WTC11 (cell line): ENCODE measurements at regions of chr2 and their contacts with region 1.

Region 1: DNA sequence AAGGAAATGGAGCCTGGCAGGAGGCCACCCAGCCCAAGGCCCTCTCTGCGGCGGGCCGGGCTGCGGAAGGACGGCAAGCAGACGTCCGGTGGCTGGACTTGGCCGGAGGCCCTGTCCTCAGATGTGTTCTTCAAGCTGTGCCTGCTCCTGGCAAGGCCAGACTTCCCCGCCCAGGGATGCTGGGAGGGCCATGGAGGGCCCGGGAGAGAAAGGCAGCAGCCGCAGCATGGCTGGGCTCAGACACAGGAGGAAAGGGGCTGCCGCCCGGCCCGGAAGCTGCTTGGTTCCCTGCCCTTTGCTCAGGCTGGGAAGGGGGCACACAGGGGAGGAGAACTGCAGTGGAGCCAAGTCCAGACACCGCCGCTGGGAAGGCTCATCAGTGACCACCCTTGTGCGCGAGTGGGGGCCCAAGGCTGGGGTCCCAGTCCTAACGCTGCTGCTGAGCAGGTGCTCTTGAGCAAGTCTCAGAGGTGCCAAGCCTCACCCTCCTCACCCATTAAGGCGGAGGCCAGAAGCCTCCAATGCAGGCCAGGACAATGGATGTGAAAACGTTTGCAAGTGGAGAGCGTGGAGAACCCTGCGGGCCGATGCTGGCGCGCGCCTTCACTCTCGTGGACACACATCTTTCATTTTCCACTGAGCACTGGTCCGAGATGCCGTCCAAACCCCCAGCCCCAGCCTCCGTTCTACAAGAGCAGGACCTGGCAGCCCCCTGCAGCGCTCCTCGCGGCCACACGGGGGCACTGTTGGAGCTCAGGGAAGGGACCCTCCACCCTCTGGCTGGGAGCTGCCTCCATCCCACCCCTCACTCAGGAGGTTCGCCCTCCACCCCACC is 7.9 kb downstream of the CROCC2 start:
- DNase-seq: peak; percentile 95
- ATAC-seq: peak; percentile 75
- H3K4me3 Mint-ChIP-seq: no peak overlapping the region
- H3K27ac Mint-ChIP-seq: no peak overlapping the region
- H3K4me1 Mint-ChIP-seq: no peaks in the 10 kb centered on the region
- H3K27me3 Mint-ChIP-seq: peaks cover 6% of the 10 kb centered on the region
- CTCF ChIP-seq: peak; percentile 96

Region 2: GRCh38 chr2:240796543-240797499 is 117.2 kb before region 1 on chr2:
- CTCF ChIA-PET with region 1: no interaction called
- POLR2A ChIA-PET with region 1: no interaction called
- DNase-seq: no peak
- ATAC-seq: no peak
- H3K4me3 Mint-ChIP-seq: no peak overlapping the region
- H3K27ac Mint-ChIP-seq: peak overlapping the region; percentile 65; the same call in 1 of the 2 replicates
- H3K4me1 Mint-ChIP-seq: peaks cover 23% of the 10 kb centered on the region
- H3K27me3 Mint-ChIP-seq: no peaks in the 10 kb centered on the region
- CTCF ChIP-seq: no peak

Region 3: DNA sequence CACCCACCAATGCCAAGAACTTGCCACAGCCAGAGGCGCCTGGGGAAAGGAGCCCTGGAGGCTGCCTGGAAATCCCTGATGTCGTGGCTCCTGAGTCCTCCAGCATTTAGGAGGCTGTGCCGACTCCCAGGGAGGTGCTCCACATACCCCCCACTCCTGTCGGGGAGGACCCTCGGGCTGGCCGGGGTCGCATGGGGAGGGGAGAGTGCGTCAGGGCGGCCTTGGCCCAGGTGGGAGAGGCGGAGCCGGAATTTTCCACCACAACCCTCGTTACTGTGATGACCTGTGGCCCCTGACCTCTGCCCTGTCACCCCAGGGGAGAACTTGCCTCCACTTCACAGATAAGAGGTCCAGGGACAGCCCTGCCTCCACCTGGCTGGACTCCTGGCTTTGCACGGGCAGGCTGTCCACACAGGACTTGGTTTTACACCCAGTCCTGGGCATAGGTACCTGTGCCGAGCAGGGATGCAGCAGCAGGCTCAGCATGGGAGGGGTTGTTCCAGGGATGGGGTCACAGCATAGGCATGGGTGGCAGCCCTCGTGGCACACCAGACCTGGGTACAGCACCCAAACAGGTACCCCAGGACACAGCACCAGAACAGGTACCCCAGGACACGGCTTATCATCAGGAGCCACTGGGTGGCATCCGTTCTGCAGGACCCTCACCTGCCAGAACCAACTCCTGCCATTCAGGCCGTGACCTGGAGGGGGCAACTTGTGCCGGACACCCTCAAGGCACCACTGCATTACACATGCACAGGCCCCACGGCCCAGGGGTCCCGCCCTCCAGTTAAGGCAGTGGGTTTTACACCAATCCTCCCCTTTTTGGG is 57.7 kb before region 1 on chr2:
- CTCF ChIA-PET with region 1: interaction called, 38 read pairs
- POLR2A ChIA-PET with region 1: no interaction called
- DNase-seq: peak; percentile 74
- ATAC-seq: peak; percentile 94
- H3K4me3 Mint-ChIP-seq: no peak overlapping the region
- H3K27ac Mint-ChIP-seq: no peak overlapping the region
- H3K4me1 Mint-ChIP-seq: no peaks in the 10 kb centered on the region
- H3K27me3 Mint-ChIP-seq: no peaks in the 10 kb centered on the region; the same call in 1 of the 2 replicates
- CTCF ChIP-seq: peak; percentile 20; the same call in 1 of the 2 replicates

Region 4: GRCh38 chr2:240898108-240898730 is 15.8 kb before region 1 on chr2:
- CTCF ChIA-PET with region 1: interaction called, 25 read pairs
- POLR2A ChIA-PET with region 1: no interaction called
- DNase-seq: no peak
- ATAC-seq: no peak
- H3K4me3 Mint-ChIP-seq: no peak overlapping the region
- H3K27ac Mint-ChIP-seq: no peak overlapping the region
- H3K4me1 Mint-ChIP-seq: no peaks in the 10 kb centered on the region
- H3K27me3 Mint-ChIP-seq: no peaks in the 10 kb centered on the region
- CTCF ChIP-seq: no peak

Region 5: DNA sequence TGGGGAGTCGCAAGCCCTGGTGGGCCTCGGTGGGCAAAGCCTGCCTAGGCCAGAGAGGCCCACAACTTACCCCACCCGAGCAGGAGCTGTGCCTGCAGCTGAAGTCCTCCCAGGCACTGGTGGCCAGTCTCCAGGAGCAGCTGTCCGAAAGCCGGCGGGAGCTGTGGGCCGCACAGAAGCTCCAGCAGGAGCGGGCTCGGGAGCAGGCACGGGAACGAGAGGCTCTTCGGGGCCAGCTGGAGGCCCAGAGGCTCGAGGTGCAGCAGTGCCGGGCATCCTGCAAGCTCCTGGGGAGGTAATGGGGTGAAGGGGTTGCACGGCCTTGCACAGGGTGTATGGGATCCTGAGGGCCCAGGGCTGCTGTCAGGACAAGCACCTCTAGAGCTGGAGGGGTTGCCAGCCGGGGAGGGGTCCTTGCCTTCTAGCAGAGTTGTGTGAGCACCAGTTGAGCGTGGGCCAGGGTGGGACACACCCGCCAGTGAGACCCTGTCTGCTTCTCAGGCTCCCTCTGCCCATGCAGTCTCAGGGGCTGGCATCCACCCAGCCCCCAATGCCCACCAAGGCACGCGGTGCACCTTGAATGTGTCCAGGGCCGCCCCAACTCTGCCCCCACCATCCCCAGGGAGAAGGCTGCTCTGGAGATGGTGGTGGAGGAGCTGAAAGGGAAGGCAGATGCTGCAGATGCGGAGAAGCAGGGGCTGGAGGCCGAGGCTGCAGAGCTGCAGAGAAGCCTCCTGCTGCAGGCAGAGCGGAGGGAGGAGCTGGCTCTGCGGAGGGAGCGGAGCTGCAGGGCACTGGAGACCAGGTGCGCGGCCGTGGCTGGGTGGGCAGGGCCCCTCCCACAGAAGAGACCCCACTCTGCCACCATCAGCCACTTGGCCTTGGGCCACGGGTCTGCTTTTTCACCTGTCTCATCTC is 19.3 kb after region 1 on chr2:
- CTCF ChIA-PET with region 1: interaction called, 11 read pairs
- POLR2A ChIA-PET with region 1: interaction called, 3 read pairs
- DNase-seq: peak; percentile 10
- ATAC-seq: no peak
- H3K4me3 Mint-ChIP-seq: no peak overlapping the region
- H3K27ac Mint-ChIP-seq: no peak overlapping the region
- H3K4me1 Mint-ChIP-seq: no peaks in the 10 kb centered on the region
- H3K27me3 Mint-ChIP-seq: no peaks in the 10 kb centered on the region
- CTCF ChIP-seq: no peak

Region 6: GRCh38 chr2:241211282-241211681 is 297.3 kb after region 1 on chr2:
- CTCF ChIA-PET with region 1: no interaction called
- POLR2A ChIA-PET with region 1: no interaction called
- DNase-seq: no peak
- ATAC-seq: no peak
- H3K4me3 Mint-ChIP-seq: no peak overlapping the region
- H3K27ac Mint-ChIP-seq: no peak overlapping the region
- H3K4me1 Mint-ChIP-seq: peaks cover 10% of the 10 kb centered on the region
- H3K27me3 Mint-ChIP-seq: no peaks in the 10 kb centered on the region
- CTCF ChIP-seq: no peak